ENCODE measurements at regions of chr7 and their contacts with region 1.

Region 1: GRCh38 chr7:77651573-77652162 is 44.6 kb upstream of the RSBN1L start:
- DNase-seq: no peak
- ATAC-seq: no peak
- H3K4me3 ChIP-seq: no peak overlapping the region
- H3K27ac ChIP-seq: no peak overlapping the region
- H3K4me1 ChIP-seq: no peaks in the 10 kb centered on the region
- H3K27me3 ChIP-seq: no peaks in the 10 kb centered on the region

Region 2: DNA sequence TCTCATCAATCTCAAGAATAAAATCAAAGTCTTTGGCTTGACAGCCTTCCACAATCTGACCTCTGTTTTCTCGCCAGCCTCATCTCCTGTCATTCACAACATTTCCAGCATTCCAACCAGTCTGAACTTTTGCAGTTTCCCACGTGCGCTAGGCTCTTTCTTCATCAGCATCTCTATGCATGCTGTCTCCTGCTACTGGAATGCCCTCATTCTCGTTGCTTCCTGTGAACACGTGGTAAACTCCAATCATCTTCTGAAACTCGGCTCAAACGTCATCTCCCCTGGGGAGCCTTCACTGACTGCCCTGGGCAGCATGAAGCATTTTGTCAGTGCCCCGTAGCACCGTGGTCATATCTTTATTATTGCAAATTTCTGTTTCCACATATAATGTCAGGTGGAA is 32.4 kb after region 1 on chr7:
- intact Hi-C with region 1: no loop called
- DNase-seq: no peak
- ATAC-seq: no peak
- H3K4me3 ChIP-seq: no peak overlapping the region
- H3K27ac ChIP-seq: no peak overlapping the region
- H3K4me1 ChIP-seq: peaks cover 0 to 4% of the 10 kb centered on the region in 2 donors
- H3K27me3 ChIP-seq: no peaks in the 10 kb centered on the region

Region 3: DNA sequence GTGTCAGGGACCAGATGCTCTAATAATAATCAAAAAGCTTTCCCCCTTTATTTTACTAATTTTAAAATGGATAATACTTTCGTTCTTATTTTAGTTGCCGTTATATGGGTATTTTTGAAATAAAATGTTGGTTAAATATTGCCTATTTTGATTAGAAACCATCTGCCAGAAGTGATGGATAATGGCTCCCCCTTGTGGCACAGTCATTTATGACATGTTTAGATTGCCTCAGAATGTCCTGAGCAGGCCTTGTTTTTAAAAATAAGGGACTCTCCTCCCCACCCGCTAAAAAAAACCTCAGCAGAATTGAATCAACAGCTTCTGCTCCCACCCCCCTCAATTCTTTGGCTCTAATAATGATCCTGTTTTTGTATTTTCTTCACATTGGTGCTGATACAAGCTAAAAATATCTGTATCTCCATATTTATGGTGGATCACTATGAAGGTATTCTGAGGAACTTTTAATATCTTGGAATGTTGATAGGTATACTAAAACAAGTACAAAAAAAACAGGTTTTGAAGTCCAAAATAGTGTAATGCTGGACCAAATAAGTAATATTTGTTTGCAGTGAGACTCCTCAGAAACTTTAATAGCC is 107.7 kb after region 1 on chr7:
- intact Hi-C with region 1: loop called (anchors 2 to 5 kb)
- DNase-seq: no peak
- ATAC-seq: peak; percentile 88
- H3K4me3 ChIP-seq: no peak overlapping the region
- H3K27ac ChIP-seq: no peak overlapping the region
- H3K4me1 ChIP-seq: peaks cover 0 to 4% of the 10 kb centered on the region in 2 donors
- H3K27me3 ChIP-seq: no peaks in the 10 kb centered on the region

Measured in aorta (tissue), 5 donors.